ENCODE measurements at regions of chr9 and their contacts with region 1.

Region 1: GRCh38 chr9:129641746-129642513 is at the start of gene ASB6:
- DNase-seq: peak; percentile 99
- ATAC-seq: peak; percentile 98
- H3K4me3 Mint-ChIP-seq: peak within 1 kb of the TSS; percentile 79
- H3K27ac Mint-ChIP-seq: peak within 1 kb of the TSS; percentile 92
- H3K4me1 Mint-ChIP-seq: peaks cover 14% of the 10 kb centered on the region
- H3K27me3 Mint-ChIP-seq: no peaks in the 10 kb centered on the region; the same call in 1 of the 2 replicates
- CTCF ChIP-seq: peak; percentile 97
- total RNA-seq, gene ASB6: 19.3 to 20.0 TPM (median 19.7 TPM) in 3 replicates

Region 2: DNA sequence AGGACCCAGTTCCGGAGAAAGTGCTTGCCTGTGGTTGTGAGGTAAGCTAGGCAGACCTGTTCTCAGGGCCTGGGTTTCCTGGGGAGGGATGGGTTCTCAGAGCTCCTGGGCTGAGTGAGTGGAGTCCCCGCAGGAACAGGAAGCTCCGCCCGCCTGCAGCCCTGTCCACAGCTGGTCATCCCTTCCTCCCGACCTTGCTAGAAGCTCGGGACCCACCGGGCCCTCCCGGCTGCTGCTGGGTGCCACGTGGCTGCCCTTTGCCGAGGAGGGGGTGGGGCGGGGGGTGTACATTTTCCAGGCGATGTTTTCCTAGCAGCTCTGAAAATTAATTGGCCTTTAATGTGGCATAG is 219.1 kb before region 1 on chr9:
- CTCF ChIA-PET with region 1: no interaction called
- POLR2A ChIA-PET with region 1: no interaction called
- DNase-seq: no peak
- ATAC-seq: peak; percentile 39
- H3K4me3 Mint-ChIP-seq: no peak overlapping the region
- H3K27ac Mint-ChIP-seq: no peak overlapping the region
- H3K4me1 Mint-ChIP-seq: peaks cover 10% of the 10 kb centered on the region; the same call in 1 of the 2 replicates
- H3K27me3 Mint-ChIP-seq: peaks cover 6% of the 10 kb centered on the region; the same call in 1 of the 2 replicates
- CTCF ChIP-seq: no peak

Region 3: DNA sequence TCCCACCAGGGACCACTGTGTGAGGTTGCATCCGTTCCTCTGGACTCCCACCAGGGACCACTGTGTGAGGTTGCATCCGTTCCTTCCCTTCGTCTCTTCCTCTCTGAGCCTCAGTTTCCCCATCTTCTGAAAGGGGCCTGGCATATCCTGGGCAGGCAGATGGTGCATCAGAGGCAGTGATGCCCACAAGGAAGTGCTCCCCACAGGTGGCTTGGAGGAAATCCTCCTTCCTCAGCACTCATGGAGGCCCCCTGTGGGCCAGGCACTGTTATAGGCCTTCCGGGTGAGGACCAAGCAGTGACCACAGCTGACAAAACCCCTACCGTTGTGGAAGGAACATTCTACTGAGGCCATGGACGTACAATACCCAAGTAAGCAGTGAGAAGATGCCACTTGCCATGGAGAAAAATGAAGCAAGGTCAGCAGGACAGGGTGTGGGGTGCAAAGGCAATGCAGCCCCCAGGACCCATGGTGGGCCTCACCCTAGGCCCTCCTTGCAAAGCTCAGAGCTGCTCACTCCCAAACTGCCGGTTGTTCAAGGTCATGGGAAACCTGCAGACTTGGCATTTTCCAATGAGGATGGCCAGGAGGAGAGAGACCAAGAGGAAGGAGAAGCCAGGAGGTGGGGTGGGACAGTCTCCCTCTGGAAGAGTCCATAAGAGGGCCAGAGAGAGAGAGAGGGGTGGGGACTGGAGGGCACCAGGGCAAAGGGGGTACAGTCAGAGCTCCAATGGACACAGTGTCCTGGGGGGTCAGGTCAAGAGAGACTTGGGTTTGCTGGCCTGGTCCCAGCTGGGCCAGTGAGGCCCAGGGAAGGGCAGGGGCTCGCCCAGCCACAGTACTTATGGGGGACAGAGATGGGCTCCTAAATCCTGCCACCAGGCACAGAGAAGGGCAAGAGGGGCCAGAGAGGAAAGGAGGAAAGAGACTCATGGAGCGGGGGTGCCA is 72.2 kb before region 1 on chr9:
- CTCF ChIA-PET with region 1: no interaction called
- POLR2A ChIA-PET with region 1: no interaction called
- DNase-seq: no peak
- ATAC-seq: peak; percentile 11; the same call in 1 of the 2 replicates
- H3K4me3 Mint-ChIP-seq: peak overlapping the region; percentile 78
- H3K27ac Mint-ChIP-seq: no peak overlapping the region
- H3K4me1 Mint-ChIP-seq: peaks cover 30% of the 10 kb centered on the region
- H3K27me3 Mint-ChIP-seq: peaks cover 17% of the 10 kb centered on the region
- CTCF ChIP-seq: no peak

Region 4: GRCh38 chr9:129610473-129611301 is 31.2 kb before region 1 on chr9:
- CTCF ChIA-PET with region 1: no interaction called
- POLR2A ChIA-PET with region 1: no interaction called
- DNase-seq: peak; percentile 94
- ATAC-seq: peak; percentile 61
- H3K4me3 Mint-ChIP-seq: peak overlapping the region; percentile 72
- H3K27ac Mint-ChIP-seq: peak overlapping the region; percentile 74; the same call in 1 of the 2 replicates
- H3K4me1 Mint-ChIP-seq: peaks cover 24% of the 10 kb centered on the region
- H3K27me3 Mint-ChIP-seq: peaks cover 11% of the 10 kb centered on the region
- CTCF ChIP-seq: peak; percentile 92

Region 5: GRCh38 chr9:129656795-129657390 is 15.0 kb after region 1 on chr9:
- CTCF ChIA-PET with region 1: interaction called, 10 read pairs
- POLR2A ChIA-PET with region 1: no interaction called
- DNase-seq: no peak
- ATAC-seq: no peak
- H3K4me3 Mint-ChIP-seq: no peak overlapping the region
- H3K27ac Mint-ChIP-seq: no peak overlapping the region
- H3K4me1 Mint-ChIP-seq: no peaks in the 10 kb centered on the region
- H3K27me3 Mint-ChIP-seq: peaks cover 6% of the 10 kb centered on the region
- CTCF ChIP-seq: no peak

Region 6: DNA sequence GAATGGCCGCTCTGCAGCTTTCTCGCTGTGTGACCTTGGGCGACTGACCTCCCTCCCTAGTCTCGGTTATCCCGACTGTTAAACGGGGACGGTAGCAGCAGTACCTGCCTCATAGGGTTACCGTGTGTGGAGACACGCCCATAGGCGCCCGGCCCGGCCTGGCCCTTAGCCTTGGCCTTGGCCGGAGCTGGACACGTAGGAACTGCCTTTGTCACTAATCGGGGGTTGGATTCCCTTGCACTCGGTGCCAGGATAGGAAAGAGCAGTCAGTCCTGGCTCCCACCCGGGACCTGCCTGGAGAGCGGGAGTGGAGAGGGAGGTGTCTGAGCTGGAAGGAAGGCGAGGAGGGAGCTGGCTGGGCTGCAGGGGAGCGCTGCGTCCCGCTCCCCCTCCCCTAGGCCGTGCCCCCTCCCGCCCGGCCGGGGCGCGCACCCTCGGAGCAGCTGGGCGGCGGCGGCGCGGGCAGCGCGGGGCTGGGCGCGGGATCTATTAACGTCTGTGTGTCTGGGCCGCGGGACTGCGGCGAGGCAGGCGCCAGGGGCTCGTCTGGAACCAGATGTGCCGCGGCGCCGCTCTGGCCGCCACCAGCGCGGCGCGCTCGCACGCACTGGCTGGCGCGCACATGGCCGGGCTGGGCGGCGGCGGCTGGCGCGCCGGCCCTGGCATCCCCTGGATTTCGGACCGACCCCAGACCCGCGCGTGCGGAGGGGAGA is 55.2 kb after region 1 on chr9:
- CTCF ChIA-PET with region 1: interaction called, 16 read pairs
- POLR2A ChIA-PET with region 1: no interaction called
- DNase-seq: peak; percentile 44
- ATAC-seq: peak; percentile 68
- H3K4me3 Mint-ChIP-seq: peak overlapping the region; percentile 91
- H3K27ac Mint-ChIP-seq: no peak overlapping the region
- H3K4me1 Mint-ChIP-seq: peaks cover 10% of the 10 kb centered on the region
- H3K27me3 Mint-ChIP-seq: peaks cover 13% of the 10 kb centered on the region
- CTCF ChIP-seq: no peak

Region 7: GRCh38 chr9:129720181-129720864 is 78.4 kb after region 1 on chr9:
- CTCF ChIA-PET with region 1: interaction called, 25 read pairs
- POLR2A ChIA-PET with region 1: no interaction called
- DNase-seq: peak; percentile 85
- ATAC-seq: peak; percentile 91
- H3K4me3 Mint-ChIP-seq: no peak overlapping the region
- H3K27ac Mint-ChIP-seq: no peak overlapping the region
- H3K4me1 Mint-ChIP-seq: no peaks in the 10 kb centered on the region
- H3K27me3 Mint-ChIP-seq: peaks cover 3% of the 10 kb centered on the region; the same call in 1 of the 2 replicates
- CTCF ChIP-seq: peak; percentile 68

Region 8: DNA sequence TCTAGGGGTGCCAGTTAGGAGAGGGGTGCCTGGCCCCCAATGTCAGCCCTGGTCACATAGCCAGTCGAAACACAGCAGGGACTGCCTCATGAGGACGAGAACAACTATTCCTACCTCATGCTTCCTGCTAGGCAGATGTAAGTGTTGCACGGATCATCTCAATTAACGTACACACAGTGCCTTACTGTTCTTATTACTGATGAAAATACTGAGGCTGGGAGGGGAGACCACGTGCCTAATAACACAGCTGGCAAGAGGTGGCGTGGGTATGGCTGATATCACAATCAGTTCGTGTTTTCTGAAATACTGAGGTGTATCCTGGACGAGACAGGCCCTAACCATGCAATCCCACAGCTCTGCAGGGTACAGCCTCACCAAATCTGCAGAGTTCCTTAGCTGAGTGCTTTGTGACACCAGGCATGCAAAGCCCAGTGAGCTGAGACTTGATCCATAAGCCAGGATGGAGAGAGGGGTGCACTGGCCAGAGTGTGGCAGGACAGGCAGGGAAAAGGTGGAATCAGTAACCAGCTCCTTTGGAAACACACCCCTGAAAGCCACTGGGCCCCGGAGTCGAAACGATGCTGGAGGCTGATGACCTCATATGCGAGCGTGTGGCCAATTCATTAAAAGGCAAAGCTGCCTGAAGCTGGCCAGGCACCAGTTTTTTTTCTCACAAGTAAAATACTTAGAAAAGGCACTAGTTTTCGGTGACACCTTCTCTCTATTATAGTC is 1967.3 kb after region 1 on chr9:
- CTCF ChIA-PET with region 1: no interaction called
- POLR2A ChIA-PET with region 1: no interaction called
- DNase-seq: no peak
- ATAC-seq: no peak
- H3K4me3 Mint-ChIP-seq: no peak overlapping the region
- H3K27ac Mint-ChIP-seq: peak overlapping the region; percentile 62
- H3K4me1 Mint-ChIP-seq: peaks cover 23% of the 10 kb centered on the region
- H3K27me3 Mint-ChIP-seq: no peaks in the 10 kb centered on the region
- CTCF ChIP-seq: no peak

Measured in WTC11 (cell line).